OCI-LY7 (cell line): ENCODE measurements at regions of chr5 and their contacts with region 1.

Region 1: DNA sequence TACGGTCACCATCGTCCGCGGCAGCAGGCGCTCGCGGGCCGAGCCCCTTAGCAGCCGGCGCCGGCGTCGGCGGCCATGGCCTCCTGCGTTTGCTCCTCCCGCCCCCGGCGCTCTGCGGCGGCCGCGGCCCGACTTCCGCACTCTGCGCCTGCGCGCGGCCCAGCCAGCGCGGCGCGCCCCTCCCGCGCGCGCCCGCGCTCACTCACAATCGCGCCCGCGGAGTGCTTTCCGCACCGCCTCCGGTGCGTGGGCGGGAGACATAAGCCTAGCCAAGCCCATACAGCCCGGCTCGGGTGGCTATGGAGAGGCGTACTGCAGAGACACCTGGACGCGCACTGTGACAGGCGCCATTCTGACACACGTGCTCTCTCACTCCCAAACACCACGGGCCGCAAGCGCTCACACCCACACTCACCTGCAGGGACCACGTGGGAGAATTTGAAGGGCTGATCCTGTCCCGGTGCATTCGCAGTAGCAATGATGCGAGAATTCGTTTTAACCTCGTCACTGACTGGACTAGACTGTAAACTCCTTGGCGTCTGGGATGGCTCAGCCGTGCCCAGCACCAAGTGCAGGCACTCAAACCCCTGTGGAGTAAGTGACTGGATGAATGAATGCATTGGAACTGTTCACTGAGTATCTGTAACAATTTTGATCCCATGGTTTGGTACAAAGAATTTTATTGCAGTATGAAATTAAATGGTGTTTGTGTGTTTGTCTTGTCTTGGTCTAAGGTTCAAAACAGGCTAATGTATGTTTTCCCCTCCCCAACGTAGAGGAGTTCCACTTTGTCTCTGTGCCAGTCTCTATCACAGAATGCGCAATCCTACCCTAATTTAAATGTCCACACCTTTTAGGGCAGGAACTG is at the start of gene RNF145:
- DNase-seq: peak; percentile 87
- H3K4me3 ChIP-seq: peak within 1 kb of the TSS; percentile 86
- H3K27ac ChIP-seq: peak within 1 kb of the TSS; percentile 92
- H3K4me1 ChIP-seq: peaks cover 41% of the 10 kb centered on the region
- CTCF ChIP-seq: no peak
- total RNA-seq, gene RNF145: 18.6 and 18.9 TPM in 2 replicates

Region 2: DNA sequence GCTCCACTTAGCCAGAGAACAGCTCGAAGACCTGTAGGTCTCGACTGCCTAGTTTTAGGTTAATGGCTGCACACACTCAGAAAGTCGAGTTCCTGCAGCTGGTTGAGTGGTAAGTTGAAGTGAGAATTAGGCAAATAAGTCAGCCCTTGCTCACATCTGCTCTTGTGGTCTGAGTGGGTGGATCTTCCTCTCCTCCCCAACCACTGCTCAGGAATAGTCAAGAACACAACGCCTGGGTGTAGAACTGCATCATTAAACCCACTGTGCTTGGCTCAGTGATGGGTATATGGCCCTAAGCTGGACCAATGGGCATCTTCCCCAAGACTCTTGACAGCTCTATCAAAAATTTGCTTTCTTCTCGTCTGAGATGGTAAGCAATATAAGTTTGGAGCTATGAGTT is 1613.2 kb before region 1 on chr5:
- CTCF ChIA-PET with region 1: no interaction called
- POLR2A ChIA-PET with region 1: no interaction called
- intact Hi-C with region 1: loop called (anchors 10 kb)
- DNase-seq: peak; percentile 94
- H3K4me3 ChIP-seq: peak overlapping the region; percentile 18
- H3K27ac ChIP-seq: peak overlapping the region; percentile 83
- H3K4me1 ChIP-seq: peaks cover 96% of the 10 kb centered on the region
- CTCF ChIP-seq: no peak

Region 3: GRCh38 chr5:159189029-159189709 is 20.5 kb before region 1 on chr5:
- CTCF ChIA-PET with region 1: no interaction called
- POLR2A ChIA-PET with region 1: interaction called, 37 read pairs
- intact Hi-C with region 1: no loop called
- DNase-seq: no peak
- H3K4me3 ChIP-seq: no peak overlapping the region
- H3K27ac ChIP-seq: no peak overlapping the region
- H3K4me1 ChIP-seq: no peaks in the 10 kb centered on the region
- CTCF ChIP-seq: no peak

Region 4: GRCh38 chr5:159262859-159263567 is 53.3 kb after region 1 on chr5 and contains the start of gene UBLCP1:
- CTCF ChIA-PET with region 1: no interaction called
- POLR2A ChIA-PET with region 1: interaction called, 7 read pairs
- intact Hi-C with region 1: loop called (anchors 2 kb)
- DNase-seq: peak; percentile 92
- H3K4me3 ChIP-seq: peak within 1 kb of the TSS; percentile 97
- H3K27ac ChIP-seq: peak within 1 kb of the TSS; percentile 72
- H3K4me1 ChIP-seq: peaks cover 17% of the 10 kb centered on the region
- CTCF ChIP-seq: no peak
- total RNA-seq, gene UBLCP1: 7.7 and 11.3 TPM in 2 replicates

Region 5: GRCh38 chr5:160467555-160468362 is 1258.1 kb after region 1 on chr5:
- CTCF ChIA-PET with region 1: no interaction called
- POLR2A ChIA-PET with region 1: no interaction called
- intact Hi-C with region 1: loop called (anchors 5 kb)
- DNase-seq: peak; percentile 83
- H3K4me3 ChIP-seq: peak overlapping the region; percentile 68
- H3K27ac ChIP-seq: peak overlapping the region; percentile 72
- H3K4me1 ChIP-seq: peaks cover 81% of the 10 kb centered on the region
- CTCF ChIP-seq: no peak